ENCODE measurements at regions of chr19 and their contacts with region 1.

Region 1: GRCh38 chr19:41753936-41754529 is 1.3 kb upstream of the CEACAM6 start:
- DNase-seq: peak; percentile 61 to 68 (median 64)
- H3K4me3 ChIP-seq: no peak overlapping the region
- H3K4me3 Mint-ChIP-seq: no peak overlapping the region
- H3K27ac ChIP-seq: no peak overlapping the region
- H3K27ac Mint-ChIP-seq: peak overlapping the region in 2 of 7 donors; percentile 3 to 24
- H3K4me1 ChIP-seq: peaks cover 3% of the 10 kb centered on the region
- H3K4me1 Mint-ChIP-seq: peaks cover 3 to 5% (median 4%) of the 10 kb centered on the region in 4 donors
- H3K27me3 ChIP-seq: no peaks in the 10 kb centered on the region
- H3K27me3 Mint-ChIP-seq: peaks cover 23 to 28% of the 10 kb centered on the region in 2 donors

Region 2: DNA sequence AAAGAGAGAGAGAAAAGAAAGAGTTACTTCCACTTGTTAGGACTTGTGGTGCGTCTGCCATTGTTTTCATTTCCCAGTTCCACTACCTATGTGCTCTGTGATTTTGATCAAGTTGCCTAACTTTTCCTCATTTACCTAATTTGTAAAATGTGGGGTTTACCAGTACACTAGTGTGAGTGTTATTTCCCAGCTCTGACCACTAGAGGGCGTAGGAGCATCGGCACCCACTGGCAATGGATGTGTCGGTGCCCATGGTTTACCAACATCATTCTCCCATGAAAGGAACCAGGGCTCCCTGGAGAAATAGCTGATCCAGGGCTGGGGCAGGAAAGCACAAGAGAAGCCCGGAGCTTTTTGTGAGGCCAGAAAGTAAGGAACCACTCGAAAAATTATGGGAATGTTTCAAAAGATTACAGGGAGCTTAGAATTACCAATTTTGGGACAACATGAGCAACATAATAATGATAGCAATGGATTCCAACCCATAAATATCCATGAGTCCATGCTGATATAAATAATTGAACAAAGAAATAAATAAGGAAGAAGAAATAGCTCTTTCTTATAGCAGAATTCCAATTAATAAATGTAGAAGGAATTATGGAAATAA is 112.1 kb before region 1 on chr19:
- CTCF ChIA-PET with region 1: interaction called, 10 read pairs
- POLR2A ChIA-PET with region 1: no interaction called
- intact Hi-C with region 1: loop called (anchors 5 kb)
- DNase-seq: peak; percentile 60 to 72 (median 69)
- H3K4me3 ChIP-seq: no peak overlapping the region
- H3K4me3 Mint-ChIP-seq: no peak overlapping the region
- H3K27ac ChIP-seq: no peak overlapping the region
- H3K27ac Mint-ChIP-seq: peak overlapping the region in 1 of 7 donors; percentile 24
- H3K4me1 ChIP-seq: peaks cover 28% of the 10 kb centered on the region
- H3K4me1 Mint-ChIP-seq: peaks cover 7 to 22% (median 13%) of the 10 kb centered on the region in 4 donors
- H3K27me3 ChIP-seq: no peaks in the 10 kb centered on the region
- H3K27me3 Mint-ChIP-seq: peaks cover 9 to 14% of the 10 kb centered on the region in 2 donors

Region 3: DNA sequence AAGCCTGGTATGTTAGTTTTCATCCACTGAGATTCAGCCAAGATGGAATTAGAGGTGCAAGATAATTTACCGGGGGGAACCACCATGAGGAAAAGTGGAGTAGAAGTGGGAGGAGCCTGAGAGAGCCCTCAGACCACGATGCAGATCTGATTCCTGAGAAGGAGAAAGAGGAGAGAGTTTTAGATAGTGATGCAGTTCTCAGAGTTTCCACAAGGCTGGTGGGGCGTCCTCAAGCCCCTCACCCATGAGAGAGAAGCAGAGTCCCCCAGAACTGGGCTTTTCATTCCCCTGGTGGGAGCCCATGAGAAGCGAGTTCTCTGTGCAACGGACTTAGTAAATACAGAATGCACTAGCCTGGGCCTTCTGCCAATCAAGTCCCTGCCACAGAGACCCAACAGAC is 27.5 kb before region 1 on chr19:
- CTCF ChIA-PET with region 1: interaction called, 14 read pairs
- POLR2A ChIA-PET with region 1: no interaction called
- intact Hi-C with region 1: no loop called
- DNase-seq: no peak
- H3K4me3 ChIP-seq: no peak overlapping the region
- H3K4me3 Mint-ChIP-seq: no peak overlapping the region
- H3K27ac ChIP-seq: no peak overlapping the region
- H3K27ac Mint-ChIP-seq: no peak overlapping the region
- H3K4me1 ChIP-seq: no peaks in the 10 kb centered on the region
- H3K4me1 Mint-ChIP-seq: no peaks in the 10 kb centered on the region
- H3K27me3 ChIP-seq: peaks cover 5% of the 10 kb centered on the region
- H3K27me3 Mint-ChIP-seq: peaks cover 18 to 33% of the 10 kb centered on the region in 2 donors

Region 4: GRCh38 chr19:41740415-41741243 is 13.4 kb before region 1 on chr19:
- CTCF ChIA-PET with region 1: interaction called, 20 read pairs
- POLR2A ChIA-PET with region 1: no interaction called
- intact Hi-C with region 1: no loop called
- DNase-seq: no peak
- H3K4me3 ChIP-seq: no peak overlapping the region
- H3K4me3 Mint-ChIP-seq: no peak overlapping the region
- H3K27ac ChIP-seq: no peak overlapping the region
- H3K27ac Mint-ChIP-seq: no peak overlapping the region
- H3K4me1 ChIP-seq: no peaks in the 10 kb centered on the region
- H3K4me1 Mint-ChIP-seq: peaks cover 0 to 10% (median 5%) of the 10 kb centered on the region in 4 donors
- H3K27me3 ChIP-seq: no peaks in the 10 kb centered on the region
- H3K27me3 Mint-ChIP-seq: peaks cover 11 to 16% of the 10 kb centered on the region in 2 donors

Region 5: GRCh38 chr19:41775360-41775695 is 21.3 kb after region 1 on chr19:
- CTCF ChIA-PET with region 1: interaction called, 99 read pairs
- POLR2A ChIA-PET with region 1: interaction called, 3 read pairs
- intact Hi-C with region 1: no loop called
- DNase-seq: no peak
- H3K4me3 ChIP-seq: no peak overlapping the region
- H3K4me3 Mint-ChIP-seq: peak overlapping the region in 3 of 8 donors; percentile 64 to 74 (median 67)
- H3K27ac ChIP-seq: no peak overlapping the region
- H3K27ac Mint-ChIP-seq: peak overlapping the region in 1 of 7 donors; percentile 87
- H3K4me1 ChIP-seq: peaks cover 39% of the 10 kb centered on the region
- H3K4me1 Mint-ChIP-seq: peaks cover 26 to 45% (median 34%) of the 10 kb centered on the region in 4 donors
- H3K27me3 ChIP-seq: peaks cover 18% of the 10 kb centered on the region
- H3K27me3 Mint-ChIP-seq: peaks cover 54 to 61% of the 10 kb centered on the region in 2 donors

Region 6: DNA sequence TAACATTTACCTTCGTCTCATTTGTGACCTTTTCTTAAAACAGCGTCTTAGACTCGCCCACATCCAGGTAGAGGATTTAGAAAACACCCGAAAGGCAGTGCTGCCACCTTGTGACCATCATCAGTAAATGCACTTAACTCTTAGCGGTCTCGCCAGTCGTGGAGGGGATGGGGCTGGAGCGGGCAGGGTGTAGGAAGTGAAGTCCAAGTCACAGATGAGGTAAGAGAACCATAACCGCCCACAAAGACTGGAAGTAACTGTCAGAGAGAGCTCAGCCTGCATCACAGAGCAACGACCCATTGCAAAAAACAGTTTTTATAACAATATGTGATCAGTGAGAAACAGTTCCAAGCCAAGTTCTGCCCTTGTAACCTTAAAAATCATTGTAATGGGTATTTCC is 31.6 kb after region 1 on chr19:
- CTCF ChIA-PET with region 1: interaction called, 167 read pairs
- POLR2A ChIA-PET with region 1: interaction called, 4 read pairs
- intact Hi-C with region 1: loop called (anchors 1 kb)
- DNase-seq: peak; percentile 72 to 80 (median 78)
- H3K4me3 ChIP-seq: no peak overlapping the region
- H3K4me3 Mint-ChIP-seq: peak overlapping the region in 4 of 8 donors; percentile 3 to 54 (median 33)
- H3K27ac ChIP-seq: no peak overlapping the region
- H3K27ac Mint-ChIP-seq: no peak overlapping the region
- H3K4me1 ChIP-seq: peaks cover 13% of the 10 kb centered on the region
- H3K4me1 Mint-ChIP-seq: peaks cover 15 to 17% (median 16%) of the 10 kb centered on the region in 4 donors
- H3K27me3 ChIP-seq: peaks cover 11% of the 10 kb centered on the region
- H3K27me3 Mint-ChIP-seq: peaks cover 34 to 46% of the 10 kb centered on the region in 2 donors

Region 7: DNA sequence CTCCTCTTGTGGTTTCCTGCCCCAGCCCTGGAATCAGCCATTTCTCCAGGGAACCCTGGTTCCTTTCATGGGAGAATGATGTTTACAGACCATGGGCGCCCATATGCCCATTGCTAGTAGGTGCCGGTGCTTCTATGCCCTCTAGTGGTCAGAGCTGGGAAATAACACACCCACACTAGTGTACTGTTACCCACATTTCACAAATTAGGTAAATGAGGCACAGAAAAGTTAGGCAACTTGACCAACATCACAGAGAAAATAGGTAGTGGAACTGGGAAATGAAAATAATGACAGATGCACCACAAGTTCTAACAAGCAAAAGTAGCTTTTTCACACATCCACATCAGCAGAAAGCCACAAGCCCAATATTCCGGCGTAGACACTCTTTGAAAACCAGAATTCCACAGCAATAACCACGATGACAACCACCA is 41.0 kb after region 1 on chr19:
- CTCF ChIA-PET with region 1: interaction called, 38 read pairs
- POLR2A ChIA-PET with region 1: no interaction called
- intact Hi-C with region 1: no loop called
- DNase-seq: peak; percentile 54 to 65 (median 58)
- H3K4me3 ChIP-seq: no peak overlapping the region
- H3K4me3 Mint-ChIP-seq: no peak overlapping the region
- H3K27ac ChIP-seq: no peak overlapping the region
- H3K27ac Mint-ChIP-seq: no peak overlapping the region
- H3K4me1 ChIP-seq: no peaks in the 10 kb centered on the region
- H3K4me1 Mint-ChIP-seq: peaks cover 0 to 4% (median under 1%) of the 10 kb centered on the region in 4 donors
- H3K27me3 ChIP-seq: no peaks in the 10 kb centered on the region
- H3K27me3 Mint-ChIP-seq: peaks cover 27 to 31% of the 10 kb centered on the region in 2 donors

Region 8: DNA sequence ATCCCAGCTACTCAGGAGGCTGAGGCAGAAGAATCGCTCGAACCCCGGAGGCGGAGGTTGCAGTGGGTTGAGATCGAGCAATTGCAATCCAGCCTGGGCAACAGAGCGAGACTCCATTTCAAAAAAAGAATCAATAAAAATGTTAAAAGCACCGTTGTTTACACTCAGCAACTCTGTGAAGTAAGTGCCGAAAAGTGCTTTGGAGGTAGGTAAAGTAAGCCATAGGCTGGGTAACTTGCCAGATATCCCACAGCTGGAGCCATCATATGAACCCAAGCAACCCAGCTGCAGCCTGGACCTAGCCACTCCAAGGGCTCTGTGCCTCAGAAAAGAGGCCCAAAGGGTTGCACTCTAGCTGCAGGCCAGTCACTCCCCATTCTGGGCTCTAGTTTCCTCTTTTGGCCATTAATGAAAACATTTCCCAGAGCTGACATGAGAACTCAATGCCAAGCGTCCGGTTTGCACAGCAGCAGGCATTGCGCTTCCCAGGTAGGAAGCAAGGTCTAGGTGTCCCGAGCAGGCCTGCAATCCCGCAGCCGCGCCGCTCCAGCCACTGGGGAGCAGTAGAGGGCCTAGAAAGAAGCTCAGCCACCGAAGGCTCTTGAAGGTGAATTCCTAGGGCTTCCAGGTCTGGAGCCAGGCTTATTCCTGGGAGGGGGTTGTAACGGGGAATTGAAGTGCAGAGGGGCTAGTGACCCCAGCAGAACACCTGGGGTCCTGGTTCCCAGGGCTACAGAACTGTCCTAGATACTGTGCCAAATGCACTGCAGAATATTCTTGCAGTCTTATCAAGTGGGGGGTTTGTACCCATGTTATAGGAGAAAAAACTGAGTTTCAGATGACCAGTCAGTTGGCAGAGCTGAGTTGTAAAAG is 119.0 kb after region 1 on chr19:
- CTCF ChIA-PET with region 1: no interaction called
- POLR2A ChIA-PET with region 1: no interaction called
- intact Hi-C with region 1: no loop called
- DNase-seq: peak; percentile 59 to 70 (median 63)
- H3K4me3 ChIP-seq: no peak overlapping the region
- H3K4me3 Mint-ChIP-seq: peak overlapping the region; percentile 26 to 85 (median 68)
- H3K27ac ChIP-seq: peak overlapping the region; percentile 66
- H3K27ac Mint-ChIP-seq: peak overlapping the region; percentile 92 to 99 (median 95)
- H3K4me1 ChIP-seq: peaks cover 98% of the 10 kb centered on the region
- H3K4me1 Mint-ChIP-seq: peaks cover 45 to 97% (median 68%) of the 10 kb centered on the region in 4 donors
- H3K27me3 ChIP-seq: no peaks in the 10 kb centered on the region
- H3K27me3 Mint-ChIP-seq: no peaks in the 10 kb centered on the region